A549 (cell line): ENCODE measurements at regions of chr15 and their contacts with region 1.

Region 1: GRCh38 chr15:93087825-93088199 is 1.2 kb downstream of the RGMA start:
- DNase-seq: peak; percentile 72 to 76
- ATAC-seq: peak; percentile 60 to 81
- H3K4me3 ChIP-seq: peak overlapping the region; percentile 45
- H3K27ac ChIP-seq: peak overlapping the region in 1 of 2 experiments; percentile 15; a peak in 1 of 6 replicates
- H3K4me1 ChIP-seq: peaks cover 16% of the 10 kb centered on the region
- CTCF ChIP-seq: peak; percentile 97
- EP300 ChIP-seq: no peak
- POLR2A ChIP-seq: no peak
- RAD21 ChIP-seq: peak; percentile 82 to 88

Region 2: DNA sequence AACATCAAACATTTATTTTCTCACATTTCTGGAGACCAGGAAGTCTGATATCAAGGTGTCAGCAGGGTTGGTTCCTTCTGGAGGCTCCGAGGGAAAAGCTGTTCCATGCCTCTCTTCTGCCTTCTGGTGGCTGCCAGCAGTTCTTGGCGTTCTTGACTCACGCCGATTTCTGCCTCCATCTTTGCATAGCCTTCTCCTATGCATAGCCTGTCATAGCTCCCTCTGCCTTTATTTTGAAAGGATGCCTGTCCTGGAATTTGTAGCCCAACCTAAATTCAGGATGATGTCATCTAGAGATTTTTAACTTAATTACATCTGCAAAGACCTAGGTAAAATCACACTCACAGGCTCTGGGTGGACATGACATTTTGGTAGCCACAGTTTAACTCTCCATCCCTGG is 69.2 kb before region 1 on chr15:
- CTCF ChIA-PET with region 1: no interaction called
- POLR2A ChIA-PET with region 1: no interaction called
- DNase-seq: peak in 1 of 2 experiments; percentile 71
- ATAC-seq: peak; percentile 79
- H3K4me3 ChIP-seq: no peak overlapping the region
- H3K27ac ChIP-seq: no peak overlapping the region
- H3K4me1 ChIP-seq: no peaks in the 10 kb centered on the region
- CTCF ChIP-seq: peak; percentile 38
- EP300 ChIP-seq: no peak
- POLR2A ChIP-seq: no peak
- RAD21 ChIP-seq: peak; percentile 36 to 61; a peak in 3 of 5 replicates

Region 3: GRCh38 chr15:93030430-93031105 is 57.2 kb before region 1 on chr15:
- CTCF ChIA-PET with region 1: interaction called, 19 read pairs
- POLR2A ChIA-PET with region 1: no interaction called
- DNase-seq: peak; percentile 69 to 91
- ATAC-seq: peak; percentile 70 to 89
- H3K4me3 ChIP-seq: no peak overlapping the region
- H3K27ac ChIP-seq: peak overlapping the region in 1 of 2 experiments; percentile 42; a peak in 2 of 6 replicates
- H3K4me1 ChIP-seq: peaks cover 24% of the 10 kb centered on the region; the same call in 2 of the 3 replicates
- CTCF ChIP-seq: peak; percentile 89
- EP300 ChIP-seq: no peak
- POLR2A ChIP-seq: no peak
- RAD21 ChIP-seq: peak; percentile 94 to 96

Region 4: GRCh38 chr15:93060336-93061263 is 27.2 kb before region 1 on chr15:
- CTCF ChIA-PET with region 1: interaction called, 22 read pairs
- POLR2A ChIA-PET with region 1: no interaction called
- DNase-seq: no peak
- ATAC-seq: 0 out of 6 replicates have a peak, but pooled peaks of 1 of the 2 experiments have one; percentile 7
- H3K4me3 ChIP-seq: no peak overlapping the region
- H3K27ac ChIP-seq: no peak overlapping the region
- H3K4me1 ChIP-seq: no peaks in the 10 kb centered on the region
- CTCF ChIP-seq: no peak
- EP300 ChIP-seq: no peak
- POLR2A ChIP-seq: no peak
- RAD21 ChIP-seq: no peak

Region 5: DNA sequence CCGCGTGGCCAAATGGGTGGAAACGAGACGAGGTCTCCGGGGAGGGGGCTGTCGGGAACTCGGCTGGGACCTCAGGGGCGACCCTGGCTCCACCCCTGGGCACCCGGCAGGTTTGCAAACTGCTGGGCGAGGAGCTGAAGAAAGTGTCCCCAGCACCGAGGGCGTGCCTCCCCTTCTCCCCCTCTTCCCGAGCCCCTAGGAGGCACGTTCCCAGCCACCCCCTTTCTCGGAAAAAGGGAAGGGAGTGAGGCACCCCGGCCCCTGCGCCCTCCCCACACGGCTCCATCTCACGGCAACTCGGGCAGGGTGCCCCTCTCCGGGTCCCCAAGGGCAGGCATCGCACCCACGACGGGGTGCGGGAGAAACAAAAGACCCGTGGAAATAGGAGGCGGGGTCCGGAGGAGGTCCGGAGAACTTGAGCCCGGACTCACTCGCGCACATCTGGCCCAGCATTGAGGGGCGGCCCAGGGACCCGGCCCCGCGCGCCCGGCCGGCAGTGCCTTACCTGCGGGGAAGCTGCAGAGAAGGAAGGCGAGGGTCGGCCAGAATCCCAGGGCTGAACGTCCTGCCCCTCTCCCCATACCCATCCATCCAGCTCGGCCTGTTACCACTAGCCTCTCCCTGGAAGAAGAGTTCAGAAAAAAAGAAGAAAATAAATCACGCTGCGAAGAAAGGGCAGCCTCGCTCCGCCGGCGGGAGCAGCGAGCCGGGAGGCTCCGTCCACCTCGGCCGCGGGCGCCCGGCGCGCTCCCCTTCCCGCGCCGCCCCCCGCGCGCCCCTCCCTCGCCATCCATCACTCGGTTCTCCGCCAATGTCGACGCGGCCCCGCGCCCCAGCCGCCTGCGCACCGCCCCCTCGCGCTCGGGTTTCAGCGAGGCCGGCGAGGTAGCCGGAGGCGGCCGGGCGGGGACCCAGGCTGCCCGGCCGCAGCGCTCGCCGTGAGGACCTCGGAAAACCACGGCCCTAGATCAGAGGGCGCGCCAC is 15.1 kb before region 1 on chr15:
- CTCF ChIA-PET with region 1: interaction called, 50 read pairs
- POLR2A ChIA-PET with region 1: no interaction called
- DNase-seq: peak; percentile 53 to 67
- ATAC-seq: peak; percentile 64 to 85
- H3K4me3 ChIP-seq: peak overlapping the region; percentile 54
- H3K27ac ChIP-seq: peak overlapping the region in 1 of 2 experiments; percentile 35; a peak in 2 of 6 replicates
- H3K4me1 ChIP-seq: peaks cover 10% of the 10 kb centered on the region
- CTCF ChIP-seq: no peak
- EP300 ChIP-seq: no peak
- POLR2A ChIP-seq: no peak
- RAD21 ChIP-seq: no peak

Region 6: GRCh38 chr15:93109336-93110102 is 21.7 kb after region 1 on chr15:
- CTCF ChIA-PET with region 1: interaction called, 19 read pairs
- POLR2A ChIA-PET with region 1: no interaction called
- DNase-seq: no peak
- ATAC-seq: no peak
- H3K4me3 ChIP-seq: no peak overlapping the region
- H3K27ac ChIP-seq: no peak overlapping the region
- H3K4me1 ChIP-seq: no peaks in the 10 kb centered on the region
- CTCF ChIP-seq: no peak
- EP300 ChIP-seq: no peak
- POLR2A ChIP-seq: no peak
- RAD21 ChIP-seq: no peak

Region 7: GRCh38 chr15:94119923-94120775 is 1032.3 kb after region 1 on chr15:
- CTCF ChIA-PET with region 1: interaction called, 11 read pairs
- POLR2A ChIA-PET with region 1: no interaction called
- DNase-seq: peak; percentile 51 to 86
- ATAC-seq: peak; percentile 94 to 99
- H3K4me3 ChIP-seq: no peak overlapping the region
- H3K27ac ChIP-seq: no peak overlapping the region
- H3K4me1 ChIP-seq: no peaks in the 10 kb centered on the region
- CTCF ChIP-seq: peak; percentile 96
- EP300 ChIP-seq: no peak
- POLR2A ChIP-seq: no peak
- RAD21 ChIP-seq: peak; percentile 92 to 97